ENCODE measurements at regions of chr9 and their contacts with region 1.

Region 1: GRCh38 chr9:106862825-106863720 is at the start of gene ZNF462:
- DNase-seq: peak; percentile 51 to 68 (median 61)
- ATAC-seq: peak; percentile 43 to 68 (median 56)
- H3K4me3 ChIP-seq: peak within 1 kb of the TSS; percentile 58 to 96 (median 78)
- H3K27ac ChIP-seq: peak within 1 kb of the TSS; percentile 81 to 95 (median 88)
- H3K4me1 ChIP-seq: peaks cover 1 to 33% (median 18%) of the 10 kb centered on the region in 12 donors
- H3K27me3 ChIP-seq: peaks cover 0 to 37% (median 0%) of the 10 kb centered on the region in 9 donors
- CTCF ChIP-seq: peak in 8 of 12 donors; percentile 5 to 62 (median 36)
- POLR2A ChIP-seq: no peak
- total RNA-seq, gene ZNF462: 16.8 to 51.3 (median 31.5) TPM

Region 2: GRCh38 chr9:105901514-105902109 is 961.5 kb before region 1 on chr9:
- intact Hi-C with region 1: loop called in 2 of 10 experiments (anchors 5 to 10 kb)
- DNase-seq: peak in 3 of 5 donors; percentile 27 to 52 (median 46)
- ATAC-seq: peak; percentile 73 to 96 (median 94)
- H3K4me3 ChIP-seq: no peak overlapping the region
- H3K27ac ChIP-seq: no peak overlapping the region
- H3K4me1 ChIP-seq: peaks cover 0 to 3% (median 0%) of the 10 kb centered on the region in 12 donors
- H3K27me3 ChIP-seq: no peaks in the 10 kb centered on the region
- CTCF ChIP-seq: peak; percentile 51 to 77 (median 72)
- POLR2A ChIP-seq: no peak

Region 3: DNA sequence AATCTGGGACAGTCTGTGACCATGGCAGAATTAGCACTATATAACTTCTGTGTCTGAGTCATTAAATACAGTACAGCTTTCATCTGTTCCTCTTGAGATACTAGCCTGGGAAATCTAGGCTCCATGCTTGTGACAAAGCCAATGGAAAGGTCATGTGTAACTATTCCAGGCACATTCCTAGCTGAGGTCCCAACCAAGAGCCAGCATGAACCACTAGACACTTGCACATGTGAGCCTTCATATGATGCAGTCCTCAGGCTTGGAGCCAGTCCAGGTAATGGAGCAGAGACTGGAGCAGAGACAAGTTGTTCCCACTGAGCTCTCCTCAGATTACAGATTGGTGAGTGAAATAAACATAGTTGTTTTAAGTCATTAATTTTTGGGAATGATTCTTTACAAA is 412.5 kb before region 1 on chr9:
- intact Hi-C with region 1: loop called in 2 of 10 experiments (anchors 10 kb)
- DNase-seq: peak in 4 of 5 donors; percentile 65 to 87 (median 70)
- ATAC-seq: peak; percentile 96 to 97 (median 96)
- H3K4me3 ChIP-seq: peak overlapping the region in 3 of 12 donors; percentile 8 to 40 (median 19)
- H3K27ac ChIP-seq: peak overlapping the region; percentile 23 to 81 (median 62)
- H3K4me1 ChIP-seq: peaks cover 0 to 14% (median 0%) of the 10 kb centered on the region in 12 donors
- H3K27me3 ChIP-seq: no peaks in the 10 kb centered on the region
- CTCF ChIP-seq: no peak
- POLR2A ChIP-seq: no peak

Region 4: GRCh38 chr9:106697750-106698502 is 165.1 kb before region 1 on chr9:
- intact Hi-C with region 1: loop called in 2 of 10 experiments (anchors 5 kb)
- DNase-seq: peak; percentile 81 to 90 (median 86)
- ATAC-seq: peak; percentile 88 to 96 (median 94)
- H3K4me3 ChIP-seq: peak overlapping the region in 11 of 12 donors; percentile 3 to 52 (median 38)
- H3K27ac ChIP-seq: peak overlapping the region; percentile 1 to 73 (median 61)
- H3K4me1 ChIP-seq: peaks cover 0 to 20% (median 8%) of the 10 kb centered on the region in 12 donors
- H3K27me3 ChIP-seq: no peaks in the 10 kb centered on the region
- CTCF ChIP-seq: no peak
- POLR2A ChIP-seq: no peak

Region 5: GRCh38 chr9:106758911-106759310 is 104.2 kb before region 1 on chr9:
- intact Hi-C with region 1: no loop called
- DNase-seq: no peak
- ATAC-seq: no peak
- H3K4me3 ChIP-seq: no peak overlapping the region
- H3K27ac ChIP-seq: no peak overlapping the region
- H3K4me1 ChIP-seq: peaks cover 0 to 10% (median 0%) of the 10 kb centered on the region in 12 donors
- H3K27me3 ChIP-seq: no peaks in the 10 kb centered on the region
- CTCF ChIP-seq: no peak
- POLR2A ChIP-seq: no peak

Region 6: DNA sequence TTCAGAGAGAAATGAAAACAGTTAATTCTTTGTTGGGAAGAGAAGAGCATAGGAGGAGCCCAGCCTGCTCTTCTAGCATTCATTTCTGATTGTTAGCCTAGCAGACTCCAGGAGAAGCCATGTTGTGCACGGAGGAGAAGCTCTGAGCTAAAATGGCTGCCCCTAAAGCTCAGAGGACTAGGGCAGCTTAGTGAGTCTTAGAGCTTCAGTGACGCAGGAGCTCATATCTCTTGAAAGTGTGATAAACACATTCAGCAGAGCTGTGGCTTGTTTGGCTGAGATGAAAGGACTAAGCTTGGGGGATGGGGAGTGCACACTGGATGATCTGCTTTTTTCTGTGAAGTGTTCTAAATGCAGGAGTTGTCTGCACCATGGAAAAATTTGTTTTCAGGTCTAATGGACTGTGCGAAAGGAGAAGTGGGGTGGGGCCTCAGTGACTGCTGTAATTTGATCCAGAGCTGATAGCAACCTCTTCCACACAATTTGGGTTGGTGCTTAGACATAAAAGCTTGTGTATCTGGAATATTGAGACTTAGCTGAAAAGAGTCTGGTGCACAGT is 58.3 kb after region 1 on chr9:
- intact Hi-C with region 1: loop called in 6 of 10 experiments (anchors 2 to 10 kb)
- DNase-seq: peak in 4 of 5 donors; percentile 56 to 66 (median 62)
- ATAC-seq: peak; percentile 88 to 95 (median 94)
- H3K4me3 ChIP-seq: peak overlapping the region in 8 of 12 donors; percentile 3 to 28 (median 16)
- H3K27ac ChIP-seq: peak overlapping the region; percentile 84 to 97 (median 94)
- H3K4me1 ChIP-seq: peaks cover 0 to 63% (median 34%) of the 10 kb centered on the region in 12 donors
- H3K27me3 ChIP-seq: no peaks in the 10 kb centered on the region
- CTCF ChIP-seq: no peak
- POLR2A ChIP-seq: no peak

Region 7: GRCh38 chr9:106962615-106963363 is 99.7 kb after region 1 on chr9:
- intact Hi-C with region 1: loop called in 4 of 10 experiments (anchors 5 kb)
- DNase-seq: peak in 4 of 5 donors; percentile 57 to 73 (median 64)
- ATAC-seq: peak; percentile 90 to 97 (median 92)
- H3K4me3 ChIP-seq: no peak overlapping the region
- H3K27ac ChIP-seq: peak overlapping the region; percentile 31 to 81 (median 67)
- H3K4me1 ChIP-seq: peaks cover 0 to 59% (median 23%) of the 10 kb centered on the region in 12 donors
- H3K27me3 ChIP-seq: no peaks in the 10 kb centered on the region
- CTCF ChIP-seq: no peak
- POLR2A ChIP-seq: no peak

Region 8: GRCh38 chr9:107000218-107000617 is 137.1 kb after region 1 on chr9:
- intact Hi-C with region 1: no loop called
- DNase-seq: no peak
- ATAC-seq: no peak
- H3K4me3 ChIP-seq: no peak overlapping the region
- H3K27ac ChIP-seq: no peak overlapping the region
- H3K4me1 ChIP-seq: no peaks in the 10 kb centered on the region
- H3K27me3 ChIP-seq: no peaks in the 10 kb centered on the region
- CTCF ChIP-seq: no peak
- POLR2A ChIP-seq: no peak

Region 9: GRCh38 chr9:107172160-107172978 is 309.3 kb after region 1 on chr9:
- intact Hi-C with region 1: loop called in 4 of 10 experiments (anchors 5 to 10 kb)
- DNase-seq: peak; percentile 66 to 77 (median 74)
- ATAC-seq: peak in 3 of 4 donors; percentile 59 to 70 (median 60)
- H3K4me3 ChIP-seq: no peak overlapping the region
- H3K27ac ChIP-seq: peak overlapping the region in 1 of 12 donors; percentile 13
- H3K4me1 ChIP-seq: peaks cover 0 to 30% (median 19%) of the 10 kb centered on the region in 12 donors
- H3K27me3 ChIP-seq: no peaks in the 10 kb centered on the region
- CTCF ChIP-seq: peak; percentile 81 to 94 (median 90)
- POLR2A ChIP-seq: no peak